Right cardiac atrium (tissue), 5 donors: ENCODE measurements at regions of chr17 and their contacts with region 1.

Region 1: DNA sequence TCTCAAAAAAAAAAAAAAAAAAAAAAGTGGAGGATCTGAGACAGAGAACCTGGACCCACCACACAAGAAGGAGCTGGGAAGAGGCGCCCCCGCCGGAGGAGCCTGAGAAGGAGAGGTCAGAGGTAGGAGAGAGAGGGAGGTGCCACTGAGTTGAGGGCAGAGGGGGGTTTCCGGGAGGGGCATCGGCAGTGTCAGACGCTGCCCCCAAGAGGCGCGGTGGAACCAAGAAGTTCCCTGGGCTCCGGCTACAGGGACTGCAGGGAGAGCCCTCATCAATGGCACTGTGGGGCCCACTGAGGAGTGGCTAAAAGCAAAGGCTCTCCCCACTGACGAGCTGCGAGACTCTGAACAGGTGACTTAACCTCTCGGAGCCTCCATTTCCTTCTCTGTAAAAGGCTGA is 4.2 kb downstream of the CCDC42 start:
- DNase-seq: no peak
- ATAC-seq: no peak
- H3K4me3 ChIP-seq: no peak overlapping the region
- H3K27ac ChIP-seq: no peak overlapping the region
- H3K4me1 ChIP-seq: no peaks in the 10 kb centered on the region
- H3K27me3 ChIP-seq: no peaks in the 10 kb centered on the region

Region 2: DNA sequence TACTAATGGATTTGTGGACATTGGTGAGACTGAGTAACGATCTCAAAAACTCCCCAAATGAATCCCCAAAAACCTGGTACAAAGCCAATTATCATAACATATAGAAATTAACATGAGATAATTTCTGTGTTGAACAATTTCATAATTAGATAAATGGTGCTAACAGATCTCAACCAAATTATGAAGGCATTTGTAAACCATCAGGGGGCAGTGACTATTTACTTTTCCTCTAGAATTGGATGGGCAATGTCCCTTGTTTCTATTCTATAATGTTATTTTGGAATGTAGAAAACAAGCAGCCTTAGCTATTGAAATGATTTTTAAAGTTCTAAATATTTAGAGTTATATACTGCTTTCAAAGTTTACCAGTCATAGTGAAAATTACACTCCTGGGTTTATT is 167.7 kb before region 1 on chr17:
- intact Hi-C with region 1: loop called in 1 of 4 experiments (anchors 5 kb)
- DNase-seq: no peak
- ATAC-seq: no peak
- H3K4me3 ChIP-seq: no peak overlapping the region
- H3K27ac ChIP-seq: no peak overlapping the region
- H3K4me1 ChIP-seq: no peaks in the 10 kb centered on the region
- H3K27me3 ChIP-seq: no peaks in the 10 kb centered on the region

Region 3: GRCh38 chr17:8681170-8681949 is 59.1 kb before region 1 on chr17:
- intact Hi-C with region 1: loop called in 2 of 4 experiments (anchors 10 kb)
- DNase-seq: peak; percentile 37 to 80 (median 77)
- ATAC-seq: peak; percentile 86 to 91
- H3K4me3 ChIP-seq: peak overlapping the region; percentile 34
- H3K27ac ChIP-seq: peak overlapping the region; percentile 32
- H3K4me1 ChIP-seq: peaks cover 3% of the 10 kb centered on the region
- H3K27me3 ChIP-seq: no peaks in the 10 kb centered on the region